CD4-positive, alpha-beta memory T cell (primary cell): ENCODE measurements at regions of chr16 and their contacts with region 1.

Region 1: GRCh38 chr16:3129137-3130131 is 5.4 kb upstream of the ZNF213 start:
- DNase-seq: peak; percentile 89 to 92 (median 90)
- H3K4me3 ChIP-seq: peak overlapping the region; percentile 56 to 64
- H3K4me3 Mint-ChIP-seq: peak overlapping the region; percentile 88 to 95 (median 94)
- H3K27ac ChIP-seq: peak overlapping the region; percentile 46
- H3K27ac Mint-ChIP-seq: peak overlapping the region; percentile 83 to 96 (median 89)
- H3K4me1 ChIP-seq: peaks cover 52% of the 10 kb centered on the region
- H3K4me1 Mint-ChIP-seq: peaks cover 26 to 70% (median 42%) of the 10 kb centered on the region in 4 donors
- H3K27me3 ChIP-seq: no peaks in the 10 kb centered on the region
- H3K27me3 Mint-ChIP-seq: no peaks in the 10 kb centered on the region

Region 2: DNA sequence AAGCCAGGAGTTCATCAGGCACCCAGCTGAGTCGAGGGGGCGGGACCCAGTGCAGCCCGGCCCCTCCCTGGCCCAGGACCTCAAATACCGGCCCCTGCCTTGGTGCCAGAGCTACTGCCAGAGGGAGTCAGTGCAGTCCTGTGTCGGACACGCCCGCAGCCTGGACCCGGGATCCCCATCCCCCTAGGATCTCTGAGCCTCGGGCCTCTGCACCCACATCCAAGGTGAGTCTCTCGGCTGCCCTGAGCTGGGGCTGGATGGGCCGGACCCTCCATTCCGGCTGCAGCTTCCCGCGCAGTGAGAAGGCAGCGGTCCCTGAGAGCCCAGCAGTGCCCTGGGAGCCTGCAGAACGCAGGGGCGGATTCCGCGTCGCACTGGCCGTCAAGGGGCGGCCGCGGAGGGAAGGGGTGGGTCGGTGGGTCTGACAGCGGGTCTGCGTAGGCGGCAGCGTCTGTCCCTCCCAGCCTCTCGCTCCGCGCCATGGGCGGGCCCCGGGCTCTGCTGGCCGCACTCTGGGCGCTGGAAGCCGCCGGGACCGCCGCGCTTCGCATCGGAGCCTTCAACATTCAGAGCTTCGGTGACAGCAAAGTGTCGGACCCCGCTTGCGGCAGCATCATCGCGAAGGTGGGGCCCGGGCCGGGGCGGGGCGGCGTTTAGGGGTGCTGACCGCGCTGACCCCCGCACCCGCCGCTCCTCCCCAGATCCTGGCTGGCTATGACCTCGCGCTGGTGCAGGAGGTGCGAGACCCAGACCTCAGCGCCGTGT is 892.9 kb before region 1 on chr16 and contains the start of gene DNASE1L2:
- CTCF ChIA-PET with region 1: no interaction called
- POLR2A ChIA-PET with region 1: no interaction called
- intact Hi-C with region 1: no loop called
- DNase-seq: no peak
- H3K4me3 ChIP-seq: no peak within 1 kb of the TSS
- H3K4me3 Mint-ChIP-seq: no peak within 1 kb of the TSS
- H3K27ac ChIP-seq: no peak within 1 kb of the TSS
- H3K27ac Mint-ChIP-seq: no peak within 1 kb of the TSS
- H3K4me1 ChIP-seq: no peaks in the 10 kb centered on the region
- H3K4me1 Mint-ChIP-seq: peaks cover 0 to 9% (median 0%) of the 10 kb centered on the region in 4 donors
- H3K27me3 ChIP-seq: no peaks in the 10 kb centered on the region
- H3K27me3 Mint-ChIP-seq: no peaks in the 10 kb centered on the region
- total RNA-seq, gene DNASE1L2: 3.9 to 4.8 TPM

Region 3: DNA sequence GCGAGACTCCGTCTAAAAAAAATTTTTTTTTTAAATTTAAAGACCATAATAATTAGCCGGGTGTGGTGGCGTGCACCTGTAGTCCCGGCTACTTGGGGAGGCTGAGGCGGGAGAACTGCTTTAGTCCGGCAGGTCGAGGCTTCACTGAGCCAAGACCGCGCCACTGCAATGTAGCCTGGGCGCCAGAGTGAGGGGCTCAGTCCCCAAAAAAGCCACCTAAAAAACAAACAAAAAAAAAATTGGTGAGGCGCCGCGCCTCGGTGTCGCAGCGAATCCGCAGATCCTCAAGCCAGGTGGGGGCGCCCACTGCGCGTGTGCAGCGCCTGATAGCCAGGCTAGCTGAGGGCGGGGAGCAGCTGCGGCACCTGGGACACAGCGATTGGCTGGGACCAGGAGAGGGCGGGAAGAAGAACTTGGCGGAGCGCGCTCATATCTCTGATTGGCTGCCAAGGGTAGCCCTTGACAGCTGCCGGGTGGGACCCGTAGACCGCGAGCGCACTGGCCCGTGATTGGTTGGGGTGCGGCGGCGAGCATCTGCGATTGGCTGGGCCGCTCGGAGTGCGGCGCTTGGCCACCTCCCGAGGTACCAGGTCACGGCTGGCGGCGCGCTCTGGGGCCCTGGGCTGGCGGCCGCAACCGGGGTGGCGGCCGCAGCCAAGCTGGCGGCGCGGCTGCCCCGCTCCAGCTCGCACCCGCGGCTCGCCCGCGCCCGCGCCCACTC is 125.7 kb before region 1 on chr16:
- CTCF ChIA-PET with region 1: interaction called, 22 read pairs
- POLR2A ChIA-PET with region 1: interaction called, 10 read pairs
- intact Hi-C with region 1: loop called (anchors 1 kb)
- DNase-seq: peak; percentile 94 to 98 (median 97)
- H3K4me3 ChIP-seq: no peak overlapping the region
- H3K4me3 Mint-ChIP-seq: peak overlapping the region; percentile 70 to 84 (median 80)
- H3K27ac ChIP-seq: no peak overlapping the region
- H3K27ac Mint-ChIP-seq: peak overlapping the region in 5 of 7 donors; percentile 32 to 86 (median 65)
- H3K4me1 ChIP-seq: peaks cover 24% of the 10 kb centered on the region
- H3K4me1 Mint-ChIP-seq: peaks cover 13 to 28% (median 21%) of the 10 kb centered on the region in 4 donors
- H3K27me3 ChIP-seq: no peaks in the 10 kb centered on the region
- H3K27me3 Mint-ChIP-seq: peaks cover 2% of the 10 kb centered on the region in 2 donors

Region 4: GRCh38 chr16:3051494-3051893 is 77.9 kb before region 1 on chr16:
- CTCF ChIA-PET with region 1: interaction called, 362 read pairs
- POLR2A ChIA-PET with region 1: interaction called, 129 read pairs
- intact Hi-C with region 1: no loop called
- DNase-seq: no peak
- H3K4me3 ChIP-seq: no peak overlapping the region
- H3K4me3 Mint-ChIP-seq: no peak overlapping the region
- H3K27ac ChIP-seq: no peak overlapping the region
- H3K27ac Mint-ChIP-seq: peak overlapping the region in 2 of 7 donors; percentile 14 to 35
- H3K4me1 ChIP-seq: peaks cover 26% of the 10 kb centered on the region
- H3K4me1 Mint-ChIP-seq: peaks cover 29 to 56% (median 37%) of the 10 kb centered on the region in 4 donors
- H3K27me3 ChIP-seq: peaks cover 8% of the 10 kb centered on the region
- H3K27me3 Mint-ChIP-seq: peaks cover 0 to 3% of the 10 kb centered on the region in 2 donors

Region 5: GRCh38 chr16:3087243-3088235 is 41.9 kb before region 1 on chr16:
- CTCF ChIA-PET with region 1: interaction called, 376 read pairs
- POLR2A ChIA-PET with region 1: interaction called, 7 read pairs
- intact Hi-C with region 1: no loop called
- DNase-seq: no peak
- H3K4me3 ChIP-seq: no peak overlapping the region
- H3K4me3 Mint-ChIP-seq: peak overlapping the region; percentile 10 to 83 (median 64)
- H3K27ac ChIP-seq: peak overlapping the region; percentile 10
- H3K27ac Mint-ChIP-seq: peak overlapping the region in 5 of 7 donors; percentile 72 to 85 (median 77)
- H3K4me1 ChIP-seq: peaks cover 39% of the 10 kb centered on the region
- H3K4me1 Mint-ChIP-seq: peaks cover 22 to 71% (median 38%) of the 10 kb centered on the region in 4 donors
- H3K27me3 ChIP-seq: no peaks in the 10 kb centered on the region
- H3K27me3 Mint-ChIP-seq: no peaks in the 10 kb centered on the region

Region 6: DNA sequence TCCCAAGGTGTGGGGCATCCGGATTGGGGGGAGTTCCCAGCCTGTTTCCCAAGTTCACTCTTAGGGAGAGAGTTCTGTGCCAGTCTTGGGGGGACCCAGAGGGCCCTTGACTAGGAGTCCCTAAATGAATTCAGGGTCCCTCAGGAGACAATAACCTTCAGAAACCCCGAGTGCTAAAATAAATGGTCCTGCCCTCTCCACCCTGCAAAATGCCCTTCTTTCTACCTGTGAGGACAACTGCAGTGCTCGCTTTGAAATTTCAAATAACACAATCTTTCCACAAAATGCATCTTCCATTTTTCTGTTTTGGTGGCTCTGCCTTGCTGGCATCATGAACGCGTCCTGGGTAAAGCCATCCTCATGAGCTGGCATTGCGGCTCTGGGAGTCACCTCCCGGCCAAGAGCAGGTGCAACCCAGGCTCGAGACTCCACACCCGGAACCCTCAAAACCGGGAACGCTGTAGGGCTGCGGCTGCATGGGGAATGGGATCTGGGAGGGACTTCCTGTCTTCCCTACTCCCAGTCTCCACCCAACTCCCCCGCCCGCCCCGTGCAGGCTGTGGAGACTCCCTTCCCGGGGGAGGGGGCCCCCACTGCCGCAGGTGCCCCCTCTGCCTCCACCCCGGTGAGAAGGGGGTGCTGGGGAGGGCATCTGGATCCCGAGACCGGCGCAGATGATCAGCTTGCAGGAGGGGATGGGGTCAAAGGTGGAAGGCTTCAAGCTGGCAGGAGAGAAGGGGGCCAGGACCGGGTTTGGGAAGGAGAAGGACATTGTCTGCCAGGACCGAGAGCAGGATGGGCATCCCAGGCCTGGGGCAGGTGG is 17.2 kb before region 1 on chr16 and contains the start of gene ZNF205:
- CTCF ChIA-PET with region 1: interaction called, 376 read pairs
- POLR2A ChIA-PET with region 1: interaction called, 146 read pairs
- intact Hi-C with region 1: no loop called
- DNase-seq: no peak
- H3K4me3 ChIP-seq: no peak within 1 kb of the TSS
- H3K4me3 Mint-ChIP-seq: no peak within 1 kb of the TSS
- H3K27ac ChIP-seq: no peak within 1 kb of the TSS
- H3K27ac Mint-ChIP-seq: peak within 1 kb of the TSS in 1 of 7 donors; percentile 59
- H3K4me1 ChIP-seq: peaks cover 3% of the 10 kb centered on the region
- H3K4me1 Mint-ChIP-seq: peaks cover 1 to 3% (median 3%) of the 10 kb centered on the region in 4 donors
- H3K27me3 ChIP-seq: no peaks in the 10 kb centered on the region
- H3K27me3 Mint-ChIP-seq: peaks cover 0 to 2% of the 10 kb centered on the region in 2 donors
- total RNA-seq, gene ZNF205: not detected

Region 7: GRCh38 chr16:3165111-3165822 is 35.8 kb after region 1 on chr16:
- CTCF ChIA-PET with region 1: interaction called, 36 read pairs
- POLR2A ChIA-PET with region 1: interaction called, 72 read pairs
- intact Hi-C with region 1: loop called (anchors 1 kb)
- DNase-seq: no peak
- H3K4me3 ChIP-seq: peak overlapping the region in 1 of 2 donors; percentile 2
- H3K4me3 Mint-ChIP-seq: peak overlapping the region; percentile 38 to 73 (median 58)
- H3K27ac ChIP-seq: peak overlapping the region; percentile 24
- H3K27ac Mint-ChIP-seq: peak overlapping the region in 5 of 7 donors; percentile 29 to 88 (median 70)
- H3K4me1 ChIP-seq: peaks cover 8% of the 10 kb centered on the region
- H3K4me1 Mint-ChIP-seq: peaks cover 4 to 21% (median 11%) of the 10 kb centered on the region in 4 donors
- H3K27me3 ChIP-seq: no peaks in the 10 kb centered on the region
- H3K27me3 Mint-ChIP-seq: no peaks in the 10 kb centered on the region